Activated T-helper 2 cell treated with anti-CD3 and anti-CD28 coated beads, Interferon-gamma antibody, Interleukin-2, Interleukin-4, amounts not matched to agents 10 μg/mL and 5 μg/mL and 100 μg/mL, durations not matched to agents 14 hours and 24 hours and 36 hours (primary cell): ENCODE measurements at regions of chr15 and their contacts with region 1.

Region 1: DNA sequence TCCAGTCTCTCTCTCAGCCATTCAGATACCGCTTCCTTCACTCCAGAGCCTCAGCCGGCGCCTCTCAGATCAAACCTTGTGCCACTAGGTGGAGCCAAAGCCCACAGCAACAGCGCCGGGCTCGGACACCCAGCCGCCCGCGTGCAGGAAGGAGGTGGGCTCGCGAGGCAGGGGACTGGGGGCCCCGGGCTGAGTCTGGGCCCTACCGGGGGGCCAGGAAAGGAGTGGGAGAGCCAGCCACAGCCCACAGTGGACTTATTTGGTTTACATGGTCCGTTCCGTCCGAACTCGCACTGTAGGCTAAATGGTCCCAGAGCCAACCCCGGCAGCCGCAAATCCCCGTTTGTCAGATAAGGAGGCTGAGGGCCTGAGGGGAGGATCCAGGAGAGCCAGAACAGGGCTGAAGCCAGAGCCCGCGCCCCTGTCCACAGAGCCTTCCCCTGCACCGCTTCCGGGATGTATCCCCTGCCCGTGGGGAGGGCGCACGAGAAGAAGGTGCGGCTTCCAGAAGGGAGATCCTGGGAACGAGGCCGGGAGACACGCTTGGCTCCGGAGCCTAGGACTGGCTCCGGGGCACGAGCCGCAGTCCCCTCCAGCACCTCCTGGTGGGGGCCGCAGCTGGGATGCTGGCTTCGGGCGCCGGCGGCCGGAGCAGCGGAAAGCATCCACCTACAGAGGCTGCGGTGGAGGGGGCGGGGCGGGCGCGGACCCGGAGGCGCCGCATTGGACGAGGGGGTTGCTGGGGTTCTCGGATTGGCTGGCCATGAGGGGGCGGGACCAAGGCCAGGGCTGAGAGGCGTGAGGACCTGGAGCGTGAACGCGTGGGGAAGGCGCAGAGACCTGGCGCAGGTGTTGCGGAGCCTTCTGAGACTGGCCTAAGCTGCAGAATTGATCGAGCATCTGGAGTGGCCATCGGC is 6.5 kb upstream of the CYP11A1 start:
- DNase-seq: peak; percentile 91
- H3K4me3 Mint-ChIP-seq: peak overlapping the region; percentile 79
- H3K27ac Mint-ChIP-seq: peak overlapping the region; percentile 60
- H3K4me1 Mint-ChIP-seq: peaks cover 28% of the 10 kb centered on the region
- H3K27me3 Mint-ChIP-seq: peaks cover 19% of the 10 kb centered on the region

Region 2: DNA sequence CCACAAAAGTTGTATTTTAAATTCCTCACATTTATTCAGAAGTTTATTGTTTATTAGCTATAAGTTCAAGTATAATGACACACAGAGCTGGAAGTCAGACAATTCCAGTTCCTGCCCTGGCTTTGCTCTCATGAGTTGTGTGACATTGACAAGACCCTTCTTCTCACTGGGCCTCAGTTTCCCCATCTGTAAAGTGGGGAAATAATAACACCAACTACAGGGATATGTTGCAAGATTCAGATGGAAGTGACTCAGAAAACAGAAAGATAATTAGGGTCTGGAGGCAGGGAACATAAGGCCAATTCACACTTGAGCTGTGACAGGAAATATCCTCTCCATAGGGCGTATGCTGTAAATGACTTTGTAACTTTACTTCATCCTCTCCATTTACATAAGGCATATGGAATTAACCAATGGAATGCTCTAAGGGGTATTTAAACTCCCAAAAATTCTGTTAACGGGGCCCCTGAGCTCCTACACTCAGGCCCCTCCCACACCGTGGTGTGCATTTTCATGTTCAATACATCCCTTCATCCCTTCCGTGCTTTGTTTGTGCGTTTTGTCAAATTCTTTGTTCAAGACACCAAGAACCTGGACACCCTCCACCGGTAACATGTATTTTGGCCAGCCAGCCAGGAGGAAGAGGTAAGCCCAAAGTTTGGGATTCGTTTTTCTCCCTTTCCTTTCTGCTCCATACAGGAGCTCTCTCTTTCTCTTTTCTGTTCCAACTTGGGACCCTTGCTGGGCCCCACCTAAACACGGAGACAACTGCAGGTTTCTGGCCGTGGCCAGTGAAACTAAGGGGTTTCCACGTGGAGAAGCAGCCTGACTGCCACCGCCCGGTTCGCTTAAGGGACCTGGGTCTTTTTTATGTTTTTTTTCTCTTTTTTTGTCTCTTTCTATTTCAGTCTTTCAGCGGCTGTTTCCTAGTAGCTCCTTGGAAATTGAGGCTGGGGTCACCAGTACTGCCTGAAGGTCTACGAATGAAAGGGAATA is 23.4 kb before region 1 on chr15:
- intact Hi-C with region 1: no loop called
- DNase-seq: no peak
- H3K4me3 Mint-ChIP-seq: no peak overlapping the region
- H3K27ac Mint-ChIP-seq: no peak overlapping the region
- H3K4me1 Mint-ChIP-seq: peaks cover 2% of the 10 kb centered on the region
- H3K27me3 Mint-ChIP-seq: peaks cover 20% of the 10 kb centered on the region

Region 3: DNA sequence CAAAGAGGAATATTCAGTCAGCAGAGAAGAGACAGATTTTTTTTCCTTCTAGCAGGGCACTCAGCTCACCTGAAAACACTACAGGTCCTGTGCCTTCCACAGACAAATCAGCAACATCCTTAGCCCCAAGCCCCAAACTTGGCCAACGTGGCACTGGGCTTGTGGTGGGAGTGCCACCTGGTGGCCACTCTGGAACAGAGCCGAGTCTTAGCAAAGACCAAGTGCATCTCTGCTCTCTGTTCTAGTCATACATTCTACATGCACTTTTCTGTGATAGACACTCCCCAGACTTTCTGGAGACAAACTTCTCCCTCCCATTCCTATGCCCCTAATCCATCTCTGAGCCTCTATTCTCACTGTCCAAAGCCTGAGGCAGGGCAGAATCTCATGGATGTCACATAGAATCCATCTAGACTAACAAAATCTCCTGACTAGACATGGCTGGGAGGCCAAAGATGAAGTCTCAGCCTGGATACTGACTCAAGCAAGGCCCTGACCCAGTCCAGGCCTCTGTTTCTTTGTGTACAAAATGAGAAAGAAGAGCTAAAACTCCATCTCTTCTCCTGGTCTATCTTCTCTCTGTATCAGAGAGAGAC is 64.8 kb after region 1 on chr15:
- intact Hi-C with region 1: loop called (anchors 1 kb)
- DNase-seq: peak; percentile 67
- H3K4me3 Mint-ChIP-seq: no peak overlapping the region
- H3K27ac Mint-ChIP-seq: peak overlapping the region; percentile 35
- H3K4me1 Mint-ChIP-seq: peaks cover 39% of the 10 kb centered on the region
- H3K27me3 Mint-ChIP-seq: no peaks in the 10 kb centered on the region

Region 4: GRCh38 chr15:74460871-74461846 is 87.2 kb after region 1 on chr15 and contains the start of gene UBL7:
- intact Hi-C with region 1: loop called (anchors 1 kb)
- DNase-seq: peak; percentile 95
- H3K4me3 Mint-ChIP-seq: peak within 1 kb of the TSS; percentile 96
- H3K27ac Mint-ChIP-seq: peak within 1 kb of the TSS; percentile 96
- H3K4me1 Mint-ChIP-seq: peaks cover 44% of the 10 kb centered on the region
- H3K27me3 Mint-ChIP-seq: no peaks in the 10 kb centered on the region
- total RNA-seq, gene UBL7: 55.3 and 59.1 TPM in 2 replicates

Region 5: GRCh38 chr15:74489518-74490338 is 115.7 kb after region 1 on chr15:
- intact Hi-C with region 1: loop called (anchors 1 kb)
- DNase-seq: peak; percentile 67
- H3K4me3 Mint-ChIP-seq: no peak overlapping the region
- H3K27ac Mint-ChIP-seq: peak overlapping the region; percentile 71
- H3K4me1 Mint-ChIP-seq: peaks cover 16% of the 10 kb centered on the region
- H3K27me3 Mint-ChIP-seq: no peaks in the 10 kb centered on the region

Region 6: GRCh38 chr15:74615508-74616365 is 241.7 kb after region 1 on chr15 and contains the start of gene CLK3:
- intact Hi-C with region 1: loop called (anchors 1 kb)
- DNase-seq: peak; percentile 95
- H3K4me3 Mint-ChIP-seq: peak within 1 kb of the TSS; percentile 96
- H3K27ac Mint-ChIP-seq: peak within 1 kb of the TSS; percentile 97
- H3K4me1 Mint-ChIP-seq: peaks cover 28% of the 10 kb centered on the region
- H3K27me3 Mint-ChIP-seq: no peaks in the 10 kb centered on the region
- total RNA-seq, gene CLK3: 119 and 122 TPM in 2 replicates

Region 7: GRCh38 chr15:74635228-74635627 is 261.2 kb after region 1 on chr15:
- intact Hi-C with region 1: loop called (anchors 2 kb)
- DNase-seq: peak; percentile 61
- H3K4me3 Mint-ChIP-seq: no peak overlapping the region
- H3K27ac Mint-ChIP-seq: no peak overlapping the region
- H3K4me1 Mint-ChIP-seq: no peaks in the 10 kb centered on the region
- H3K27me3 Mint-ChIP-seq: no peaks in the 10 kb centered on the region

Region 8: DNA sequence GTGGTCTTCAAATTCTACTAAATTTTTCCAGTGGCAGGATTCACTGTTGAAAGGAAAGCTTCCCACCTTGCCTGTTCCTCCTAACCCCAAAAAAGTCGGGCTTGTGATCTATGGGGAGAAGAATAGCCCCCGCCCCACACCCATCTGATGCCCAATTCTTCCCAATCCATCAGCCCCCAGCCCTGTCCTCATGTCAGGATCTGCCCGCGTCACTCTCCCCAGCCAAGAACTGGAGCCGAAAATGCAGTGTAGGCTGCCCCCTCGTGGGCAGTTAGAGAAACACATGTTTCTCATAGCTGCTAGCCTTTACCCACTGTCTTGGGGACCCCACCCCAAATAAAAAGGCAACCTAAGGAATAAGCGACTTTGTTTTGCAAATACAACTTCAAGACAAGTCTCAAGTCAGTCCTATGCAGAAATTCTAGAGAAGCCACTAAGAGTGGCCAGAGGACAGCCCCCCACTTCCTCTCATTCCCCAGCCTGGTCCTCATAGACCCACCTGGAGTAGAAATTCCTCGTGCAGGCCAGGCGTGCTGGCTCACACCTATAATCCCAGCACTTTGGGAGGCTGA is 394.9 kb after region 1 on chr15:
- intact Hi-C with region 1: loop called (anchors 1 kb)
- DNase-seq: peak; percentile 45
- H3K4me3 Mint-ChIP-seq: no peak overlapping the region
- H3K27ac Mint-ChIP-seq: no peak overlapping the region
- H3K4me1 Mint-ChIP-seq: peaks cover 23% of the 10 kb centered on the region
- H3K27me3 Mint-ChIP-seq: no peaks in the 10 kb centered on the region

Region 9: GRCh38 chr15:74884428-74885223 is 510.6 kb after region 1 on chr15:
- intact Hi-C with region 1: no loop called
- DNase-seq: no peak
- H3K4me3 Mint-ChIP-seq: no peak overlapping the region
- H3K27ac Mint-ChIP-seq: no peak overlapping the region
- H3K4me1 Mint-ChIP-seq: peaks cover 18% of the 10 kb centered on the region
- H3K27me3 Mint-ChIP-seq: no peaks in the 10 kb centered on the region